HepG2 (cell line): ENCODE measurements at regions of chr17 and their contacts with region 1.

Region 1: GRCh38 chr17:77208217-77208808 is 67.5 kb downstream of the SEC14L1 start:
- DNase-seq: peak; percentile 87
- ATAC-seq: peak; percentile 90
- H3K4me3 ChIP-seq: peak overlapping the region in 1 of 3 experiments; percentile 27; a peak in 1 of 6 replicates
- H3K27ac ChIP-seq: peak overlapping the region; percentile 73
- H3K4me1 ChIP-seq: peaks cover 37% of the 10 kb centered on the region
- H3K27me3 ChIP-seq: no peaks in the 10 kb centered on the region
- CTCF ChIP-seq: peak; percentile 90
- EP300 ChIP-seq: peak in 1 of 2 experiments; percentile 83; a peak in 2 of 4 replicates
- POLR2A ChIP-seq: no peak; a peak in 1 of 4 replicates
- RAD21 ChIP-seq: peak; percentile 77

Region 2: GRCh38 chr17:77096570-77097214 is 111.6 kb before region 1 on chr17:
- CTCF ChIA-PET with region 1: interaction called, 8 read pairs
- POLR2A ChIA-PET with region 1: interaction called, 12 read pairs
- in situ Hi-C with region 1: no loop called
- intact Hi-C with region 1: loop called (anchors 1 kb)
- DNase-seq: peak; percentile 41
- ATAC-seq: 0 out of 3 replicates have a peak, but pooled peaks have one; percentile 25
- H3K4me3 ChIP-seq: no peak overlapping the region
- H3K27ac ChIP-seq: no peak overlapping the region
- H3K4me1 ChIP-seq: peaks cover 49% of the 10 kb centered on the region
- H3K27me3 ChIP-seq: no peaks in the 10 kb centered on the region
- CTCF ChIP-seq: peak; percentile 67
- EP300 ChIP-seq: no peak
- POLR2A ChIP-seq: no peak
- RAD21 ChIP-seq: peak; percentile 71; the same call in 1 of the 2 replicates

Region 3: DNA sequence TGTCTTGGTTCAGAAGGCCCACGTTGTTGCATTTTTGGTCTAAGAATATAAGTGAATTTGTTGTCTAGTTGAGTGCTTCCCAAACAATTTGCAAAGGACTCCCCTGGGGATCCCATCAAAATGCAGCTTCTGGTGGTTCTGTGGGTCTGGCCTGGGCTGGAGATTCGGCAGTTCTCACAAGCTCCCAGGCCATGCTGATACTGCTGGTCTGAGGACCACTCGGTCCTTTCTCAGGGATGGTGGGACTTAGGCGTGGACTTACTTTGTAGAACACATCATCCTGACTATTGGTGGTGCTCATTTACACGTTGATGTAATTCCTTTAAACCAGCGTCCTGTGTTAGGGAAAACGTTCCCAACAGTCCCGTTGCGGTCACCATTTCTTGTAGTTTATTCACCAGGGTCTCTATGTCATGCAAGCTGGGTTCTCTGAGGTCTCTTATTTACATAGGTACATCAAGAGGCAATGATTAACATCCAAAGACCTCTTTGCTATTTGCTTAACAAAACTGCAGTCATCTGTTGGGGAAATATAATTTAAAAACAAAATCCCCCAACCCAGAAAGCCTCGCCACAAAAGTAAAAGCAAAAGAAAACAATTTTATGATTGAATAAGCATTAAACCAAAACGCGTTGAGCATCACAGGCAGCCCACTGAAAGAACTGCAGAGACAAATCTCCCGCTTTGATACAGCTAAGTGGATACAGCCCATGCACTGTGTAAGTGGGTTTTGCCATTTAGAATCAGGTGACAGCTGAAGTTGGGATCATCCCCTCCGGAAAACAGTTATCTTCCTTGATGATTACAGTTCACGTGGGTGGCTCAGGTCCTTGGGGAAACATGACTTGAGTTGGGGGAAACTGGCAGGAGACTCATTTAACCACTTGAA is 106.5 kb before region 1 on chr17:
- CTCF ChIA-PET with region 1: interaction called, 8 read pairs
- POLR2A ChIA-PET with region 1: interaction called, 12 read pairs
- in situ Hi-C with region 1: no loop called
- intact Hi-C with region 1: loop called (anchors 1 kb)
- DNase-seq: peak; percentile 88
- ATAC-seq: peak; percentile 89
- H3K4me3 ChIP-seq: peak overlapping the region in 2 of 3 experiments; percentile 19 to 44; a peak in 1 of 6 replicates
- H3K27ac ChIP-seq: peak overlapping the region; percentile 68
- H3K4me1 ChIP-seq: peaks cover 84% of the 10 kb centered on the region
- H3K27me3 ChIP-seq: no peaks in the 10 kb centered on the region
- CTCF ChIP-seq: no peak
- EP300 ChIP-seq: peak in 1 of 2 experiments; percentile 76; a peak in 2 of 4 replicates
- POLR2A ChIP-seq: peak in 1 of 2 experiments; percentile 48; a peak in 1 of 4 replicates
- RAD21 ChIP-seq: no peak

Region 4: DNA sequence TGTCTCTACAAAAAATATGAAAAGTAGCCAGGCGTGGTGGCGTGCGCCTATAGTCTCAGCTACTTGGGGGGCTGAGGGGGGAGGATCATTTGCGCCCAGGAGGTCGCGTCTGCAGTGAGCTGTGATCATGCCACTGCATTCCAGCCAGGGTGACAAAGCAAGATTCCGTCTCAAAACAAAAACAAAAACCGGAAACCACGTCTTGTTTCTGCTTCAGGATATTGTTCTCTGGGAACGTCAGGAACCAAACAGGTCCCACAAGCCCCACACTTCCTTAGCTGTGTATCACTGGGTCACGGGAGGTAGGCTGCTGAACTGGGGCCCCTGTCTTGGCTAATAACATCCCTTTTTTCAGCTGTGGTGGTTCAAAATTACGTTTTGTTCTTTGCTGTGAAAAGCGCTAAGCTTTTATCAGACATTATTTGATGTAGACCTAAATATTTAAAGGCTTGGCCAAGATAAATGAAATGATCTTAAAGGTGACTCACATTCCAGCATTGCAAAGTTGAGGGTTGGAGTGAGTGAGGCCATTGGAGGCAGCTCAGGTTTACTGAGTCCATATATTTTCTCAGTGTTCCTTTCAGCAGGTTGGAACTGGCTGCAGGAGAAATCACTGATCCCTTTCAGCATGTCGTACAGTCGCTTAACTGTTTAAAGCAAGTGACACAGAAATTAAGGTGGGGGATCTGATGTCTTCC is 84.0 kb before region 1 on chr17:
- CTCF ChIA-PET with region 1: no interaction called
- POLR2A ChIA-PET with region 1: interaction called, 12 read pairs
- in situ Hi-C with region 1: no loop called
- intact Hi-C with region 1: no loop called
- DNase-seq: no peak
- ATAC-seq: no peak
- H3K4me3 ChIP-seq: no peak overlapping the region
- H3K27ac ChIP-seq: no peak overlapping the region
- H3K4me1 ChIP-seq: peaks cover 59% of the 10 kb centered on the region
- H3K27me3 ChIP-seq: no peaks in the 10 kb centered on the region
- CTCF ChIP-seq: no peak
- EP300 ChIP-seq: no peak
- POLR2A ChIP-seq: no peak
- RAD21 ChIP-seq: no peak

Region 5: GRCh38 chr17:77140166-77140878 is 68.0 kb before region 1 on chr17:
- CTCF ChIA-PET with region 1: no interaction called
- POLR2A ChIA-PET with region 1: interaction called, 9 read pairs
- in situ Hi-C with region 1: no loop called
- intact Hi-C with region 1: loop called (anchors 2 kb)
- DNase-seq: peak; percentile 96
- ATAC-seq: peak; percentile 91
- H3K4me3 ChIP-seq: peak overlapping the region; percentile 50 to 84 (median 78)
- H3K27ac ChIP-seq: peak overlapping the region; percentile 89
- H3K4me1 ChIP-seq: peaks cover 57% of the 10 kb centered on the region
- H3K27me3 ChIP-seq: no peaks in the 10 kb centered on the region; a peak in 1 of 5 replicates
- CTCF ChIP-seq: no peak
- EP300 ChIP-seq: peak; percentile 33 to 45; a peak in 2 of 4 replicates
- POLR2A ChIP-seq: peak; percentile 92 to 96
- RAD21 ChIP-seq: peak; percentile 76

Region 6: GRCh38 chr17:77164483-77165091 is 43.7 kb before region 1 on chr17:
- CTCF ChIA-PET with region 1: no interaction called
- POLR2A ChIA-PET with region 1: interaction called, 4 read pairs
- in situ Hi-C with region 1: no loop called
- intact Hi-C with region 1: loop called (anchors 5 kb)
- DNase-seq: peak; percentile 43
- ATAC-seq: peak; percentile 40
- H3K4me3 ChIP-seq: no peak overlapping the region
- H3K27ac ChIP-seq: peak overlapping the region; percentile 3
- H3K4me1 ChIP-seq: peaks cover 59% of the 10 kb centered on the region
- H3K27me3 ChIP-seq: no peaks in the 10 kb centered on the region
- CTCF ChIP-seq: no peak
- EP300 ChIP-seq: no peak
- POLR2A ChIP-seq: no peak
- RAD21 ChIP-seq: no peak

Region 7: GRCh38 chr17:77247048-77247541 is 38.8 kb after region 1 on chr17:
- CTCF ChIA-PET with region 1: no interaction called
- POLR2A ChIA-PET with region 1: no interaction called
- in situ Hi-C with region 1: no loop called
- intact Hi-C with region 1: loop called (anchors 5 kb)
- DNase-seq: peak; percentile 67
- ATAC-seq: peak; percentile 93
- H3K4me3 ChIP-seq: peak overlapping the region; percentile 54 to 81 (median 59); a peak in 5 of 6 replicates
- H3K27ac ChIP-seq: no peak overlapping the region
- H3K4me1 ChIP-seq: peaks cover 19% of the 10 kb centered on the region
- H3K27me3 ChIP-seq: peaks cover 17 to 58% of the 10 kb centered on the region in 2 experiments
- CTCF ChIP-seq: peak; percentile 98
- EP300 ChIP-seq: no peak
- POLR2A ChIP-seq: no peak
- RAD21 ChIP-seq: peak; percentile 99